Activated naive CD4-positive, alpha-beta T cell treated with anti-CD3 and anti-CD28 coated beads for 36 hours (primary cell): ENCODE measurements at regions of chr4 and their contacts with region 1.

Region 1: GRCh38 chr4:16225863-16226815 is at the start of gene TAPT1:
- DNase-seq: peak; percentile 79
- H3K4me3 Mint-ChIP-seq: peak within 1 kb of the TSS; percentile 91
- H3K27ac Mint-ChIP-seq: peak within 1 kb of the TSS; percentile 98
- H3K4me1 Mint-ChIP-seq: peaks cover 56% of the 10 kb centered on the region
- H3K27me3 Mint-ChIP-seq: no peaks in the 10 kb centered on the region
- total RNA-seq, gene TAPT1: 48.6 to 48.9 TPM

Region 2: DNA sequence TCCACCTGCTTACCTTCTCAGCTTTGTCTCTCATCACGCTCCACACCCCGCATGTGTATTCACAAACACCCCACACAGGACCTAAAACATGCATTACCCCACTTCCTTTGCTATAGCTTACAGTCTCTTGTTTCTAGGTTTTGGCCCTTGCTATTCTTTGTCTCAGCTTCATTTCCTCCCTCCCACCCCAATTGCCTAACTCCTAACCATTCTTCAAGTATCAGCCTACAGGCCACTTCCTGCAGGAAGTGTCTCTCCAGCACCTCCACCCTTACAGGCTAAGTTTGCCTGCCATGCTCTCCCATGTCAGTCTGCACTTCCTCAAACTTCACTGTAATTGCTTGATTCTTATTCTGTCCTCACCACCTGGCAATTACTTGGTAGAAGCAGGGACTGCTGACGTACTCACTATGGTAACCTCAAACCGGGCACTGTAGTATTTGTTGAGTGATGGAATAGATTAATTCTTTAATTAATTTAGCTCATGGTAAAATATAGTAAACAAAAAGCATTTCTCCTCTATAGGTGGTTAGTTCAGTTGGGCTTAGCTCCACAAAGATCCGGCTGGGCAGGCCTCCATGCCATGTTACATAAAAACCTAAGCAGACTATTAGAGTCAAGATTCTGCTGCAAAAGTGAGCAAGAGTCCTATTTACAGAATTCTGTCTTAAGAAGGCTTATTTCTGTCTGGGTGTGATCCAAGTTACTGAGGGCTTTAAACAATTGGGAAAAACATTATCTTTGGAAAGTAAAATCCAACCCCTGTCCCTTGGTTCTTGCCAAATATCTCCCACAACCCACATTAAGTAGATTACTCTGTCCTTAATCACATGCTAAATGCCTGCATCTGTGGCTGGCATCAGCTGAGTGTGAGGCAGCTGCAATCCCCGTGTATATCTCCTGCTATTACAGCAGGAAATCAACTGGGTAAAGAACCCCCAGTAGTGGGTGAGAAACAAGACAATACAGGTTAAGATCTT is 1348.6 kb before region 1 on chr4:
- CTCF ChIA-PET with region 1: no interaction called
- intact Hi-C with region 1: no loop called
- DNase-seq: no peak
- H3K4me3 Mint-ChIP-seq: no peak overlapping the region
- H3K27ac Mint-ChIP-seq: no peak overlapping the region
- H3K4me1 Mint-ChIP-seq: peaks cover 28% of the 10 kb centered on the region
- H3K27me3 Mint-ChIP-seq: no peaks in the 10 kb centered on the region

Region 3: DNA sequence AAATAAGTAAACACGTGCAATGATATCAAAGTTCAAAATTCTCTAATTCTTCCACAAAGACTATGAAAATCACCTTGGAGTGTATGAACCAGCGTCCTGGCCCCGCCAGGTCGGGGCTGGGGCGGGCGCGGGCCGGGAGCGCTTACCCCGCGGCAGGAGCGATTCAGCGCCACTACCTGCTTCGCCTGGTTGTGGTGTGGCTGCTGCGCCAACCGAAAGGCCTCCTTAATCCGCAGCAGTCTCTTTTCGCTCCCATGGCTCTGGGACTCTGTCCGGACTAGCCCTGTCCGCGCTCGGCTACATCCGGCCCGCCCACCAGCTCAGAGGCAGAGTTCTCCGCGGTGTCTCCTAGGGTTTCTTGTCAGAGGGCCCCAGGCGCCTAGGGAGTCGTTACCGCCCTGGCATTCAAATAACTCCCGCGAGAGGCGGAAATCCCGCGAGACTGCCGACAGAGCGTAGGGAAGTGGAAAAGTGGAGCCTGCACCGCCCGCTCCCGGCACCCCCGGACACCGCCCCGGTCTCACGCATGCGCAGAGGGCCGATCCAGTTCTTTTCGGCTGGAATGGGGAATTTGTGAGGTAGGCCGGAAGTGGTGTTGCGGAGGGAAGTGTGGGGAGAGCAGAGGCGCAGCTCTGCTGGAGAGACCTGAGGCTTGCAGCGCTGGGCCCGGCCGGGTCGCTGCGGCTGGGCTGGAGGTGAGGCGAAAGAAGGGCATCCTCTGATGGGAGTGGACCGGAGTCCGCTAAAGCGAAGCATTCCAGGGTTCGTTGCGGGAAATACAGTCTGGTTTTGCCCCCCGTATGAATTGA is 544.7 kb before region 1 on chr4 and contains the start of gene FAM200B:
- CTCF ChIA-PET with region 1: no interaction called
- intact Hi-C with region 1: loop called (anchors 2 kb)
- DNase-seq: peak; percentile 99
- H3K4me3 Mint-ChIP-seq: peak within 1 kb of the TSS; percentile 90
- H3K27ac Mint-ChIP-seq: peak within 1 kb of the TSS; percentile 89
- H3K4me1 Mint-ChIP-seq: peaks cover 39% of the 10 kb centered on the region
- H3K27me3 Mint-ChIP-seq: peaks cover 3% of the 10 kb centered on the region
- total RNA-seq, gene FAM200B: 8.0 to 9.1 TPM

Region 4: DNA sequence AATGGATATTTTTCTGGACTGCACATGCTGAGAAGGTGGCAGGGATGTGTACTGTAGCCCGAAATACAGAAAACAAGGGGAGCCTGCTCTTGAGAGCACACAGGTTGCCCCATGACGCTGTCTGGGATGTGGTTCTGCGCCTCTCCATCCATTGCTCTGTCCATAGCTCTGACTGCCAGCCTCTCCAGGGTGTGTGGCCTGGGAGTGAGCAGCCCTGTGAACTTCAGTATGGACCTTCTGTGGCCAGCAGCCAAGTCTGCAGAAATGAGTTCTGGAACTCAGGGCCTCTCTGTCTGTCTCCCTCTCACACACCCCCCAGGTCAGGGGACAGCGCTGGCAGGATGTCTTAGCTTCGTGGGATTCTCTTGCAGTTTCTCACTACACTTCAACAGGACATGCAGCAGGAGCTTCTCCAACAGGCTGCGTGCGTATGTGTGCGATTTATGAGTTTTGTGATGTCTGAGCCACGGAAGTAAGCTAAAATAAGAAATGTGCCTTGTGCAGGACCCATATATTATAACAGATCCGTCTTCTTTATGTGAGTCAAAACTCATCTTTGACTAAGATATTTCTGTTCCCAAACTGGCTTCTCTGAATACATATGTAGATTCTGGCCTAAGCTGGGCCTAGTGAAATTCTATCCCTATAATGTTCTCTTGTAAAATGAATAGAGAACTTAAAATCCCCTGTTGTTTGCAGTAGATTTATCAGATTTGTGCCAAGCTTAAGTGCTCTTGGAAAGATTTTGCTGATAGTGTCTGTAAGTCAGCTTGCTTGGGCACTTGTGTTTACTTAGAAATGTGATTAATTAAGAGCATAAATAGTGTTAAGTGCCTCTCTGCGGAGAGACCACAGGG is 182.3 kb before region 1 on chr4:
- CTCF ChIA-PET with region 1: no interaction called
- intact Hi-C with region 1: no loop called
- DNase-seq: no peak
- H3K4me3 Mint-ChIP-seq: no peak overlapping the region
- H3K27ac Mint-ChIP-seq: no peak overlapping the region
- H3K4me1 Mint-ChIP-seq: no peaks in the 10 kb centered on the region
- H3K27me3 Mint-ChIP-seq: no peaks in the 10 kb centered on the region

Region 5: DNA sequence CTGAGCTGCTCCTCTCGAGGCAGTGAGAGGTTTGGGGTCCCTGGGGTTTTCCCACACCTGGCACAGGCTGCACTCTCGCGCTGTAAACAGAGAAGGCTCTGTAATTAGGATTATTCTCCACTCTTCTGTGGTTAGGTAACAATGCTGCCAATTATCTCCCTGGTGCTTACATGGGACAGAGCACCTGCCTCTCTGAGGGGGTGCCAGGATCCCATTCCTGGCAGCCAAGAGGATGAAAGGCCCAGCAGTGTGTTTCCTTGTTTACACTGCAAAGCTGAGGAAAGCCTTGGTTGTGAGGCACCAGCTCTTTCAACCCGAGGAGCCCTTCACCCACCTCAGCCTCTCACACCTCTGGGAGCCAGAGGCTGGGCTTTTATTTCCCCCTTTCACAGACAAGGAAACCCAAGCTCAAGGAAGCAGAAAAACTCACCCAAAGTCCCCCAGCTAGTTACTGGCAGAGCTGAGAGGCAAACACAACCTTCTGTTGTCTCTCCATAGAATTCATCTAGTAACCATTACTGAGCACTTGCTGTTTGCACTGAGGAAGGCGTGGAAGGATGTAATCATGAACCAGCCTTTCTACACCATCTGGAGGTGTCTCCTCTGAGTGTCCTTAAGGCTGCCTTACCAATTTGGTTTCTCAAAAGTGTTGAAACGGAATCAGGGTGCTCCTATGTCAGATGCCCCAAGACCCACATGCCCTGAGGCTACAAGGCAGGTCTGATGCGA is 102.6 kb before region 1 on chr4:
- CTCF ChIA-PET with region 1: no interaction called
- intact Hi-C with region 1: loop called (anchors 2 kb)
- DNase-seq: no peak
- H3K4me3 Mint-ChIP-seq: no peak overlapping the region
- H3K27ac Mint-ChIP-seq: peak overlapping the region; percentile 85
- H3K4me1 Mint-ChIP-seq: peaks cover 25% of the 10 kb centered on the region
- H3K27me3 Mint-ChIP-seq: no peaks in the 10 kb centered on the region

Region 6: GRCh38 chr4:16264798-16265197 is 38.7 kb after region 1 on chr4:
- CTCF ChIA-PET with region 1: interaction called, 12 read pairs
- intact Hi-C with region 1: loop called (anchors 2 kb)
- DNase-seq: no peak
- H3K4me3 Mint-ChIP-seq: no peak overlapping the region
- H3K27ac Mint-ChIP-seq: no peak overlapping the region
- H3K4me1 Mint-ChIP-seq: peaks cover 5% of the 10 kb centered on the region
- H3K27me3 Mint-ChIP-seq: no peaks in the 10 kb centered on the region

Region 7: GRCh38 chr4:16289897-16290554 is 63.9 kb after region 1 on chr4:
- CTCF ChIA-PET with region 1: no interaction called
- intact Hi-C with region 1: no loop called
- DNase-seq: peak; percentile 7
- H3K4me3 Mint-ChIP-seq: no peak overlapping the region
- H3K27ac Mint-ChIP-seq: no peak overlapping the region
- H3K4me1 Mint-ChIP-seq: peaks cover 5% of the 10 kb centered on the region
- H3K27me3 Mint-ChIP-seq: peaks cover 16% of the 10 kb centered on the region

Region 8: GRCh38 chr4:17614416-17615299 is 1388.5 kb after region 1 on chr4 and contains the start of gene MED28:
- CTCF ChIA-PET with region 1: no interaction called
- intact Hi-C with region 1: loop called (anchors 10 kb)
- DNase-seq: peak; percentile 98
- H3K4me3 Mint-ChIP-seq: peak within 1 kb of the TSS; percentile 98
- H3K27ac Mint-ChIP-seq: peak within 1 kb of the TSS; percentile 85
- H3K4me1 Mint-ChIP-seq: peaks cover 49% of the 10 kb centered on the region
- H3K27me3 Mint-ChIP-seq: no peaks in the 10 kb centered on the region
- total RNA-seq, gene MED28: 52.3 to 59.5 TPM